GM10248 (cell line): ENCODE measurements at regions of chrX and their contacts with region 1.

Region 1: GRCh38 chrX:123408821-123409737 is 225.0 kb downstream of the GRIA3 start:
- DNase-seq: no peak
- CTCF ChIP-seq: no peak

Region 2: DNA sequence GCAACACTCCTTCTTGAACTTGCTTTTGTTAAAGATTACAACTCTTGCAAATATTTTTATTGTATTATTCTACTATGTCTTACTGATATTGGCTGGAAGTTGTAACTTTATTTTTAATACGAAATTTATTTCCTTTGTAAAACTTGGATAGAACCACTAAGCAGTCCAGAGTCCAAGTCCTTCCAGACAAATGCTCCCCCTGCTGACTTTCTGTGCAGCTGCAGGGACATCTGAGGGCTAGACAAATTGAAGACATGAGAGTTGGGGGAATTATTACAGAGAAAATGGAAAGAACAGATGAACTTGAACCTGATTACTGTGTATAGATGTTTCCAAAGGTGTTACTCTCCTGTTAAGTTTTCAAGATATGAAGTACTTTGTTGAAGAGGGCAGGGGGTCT is 13.8 kb after region 1 on chrX:
- CTCF ChIA-PET with region 1: interaction called, 25 read pairs
- POLR2A ChIA-PET with region 1: no interaction called
- DNase-seq: no peak
- CTCF ChIP-seq: peak; percentile 67

Region 3: DNA sequence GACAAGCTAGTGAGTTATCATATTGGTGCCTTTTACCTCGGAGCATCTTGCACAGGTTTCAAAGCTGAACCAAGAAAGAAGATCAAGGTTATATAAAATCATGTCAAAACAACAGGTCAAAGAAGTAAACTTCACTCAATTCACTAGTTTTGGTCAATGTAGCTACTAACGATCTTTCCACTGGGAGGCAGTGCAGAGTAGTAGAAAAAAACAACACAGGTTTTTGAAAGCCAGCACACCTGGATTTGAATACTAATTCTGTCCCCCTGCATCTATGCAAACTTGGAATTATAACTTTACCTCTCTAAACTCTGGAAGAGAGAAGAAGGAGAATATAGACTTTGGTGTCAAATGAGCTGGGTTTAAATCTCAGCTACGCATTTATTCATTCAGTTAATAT is 41.1 kb after region 1 on chrX:
- CTCF ChIA-PET with region 1: no interaction called
- POLR2A ChIA-PET with region 1: no interaction called
- DNase-seq: peak; percentile 3
- CTCF ChIP-seq: peak; percentile 25